CD8-positive, alpha-beta memory T cell (primary cell): ENCODE measurements at regions of chr13 and their contacts with region 1.

Region 1: GRCh38 chr13:42110410-42111155 is 62.1 kb downstream of the DGKH start:
- DNase-seq: peak in 3 of 5 donors; percentile 9 to 52 (median 45)
- H3K4me3 ChIP-seq: no peak overlapping the region
- H3K4me3 Mint-ChIP-seq: no peak overlapping the region
- H3K27ac ChIP-seq: no peak overlapping the region
- H3K27ac Mint-ChIP-seq: peak overlapping the region in 1 of 8 donors; percentile 15
- H3K4me1 ChIP-seq: peaks cover 6% of the 10 kb centered on the region
- H3K4me1 Mint-ChIP-seq: peaks cover 6 to 13% (median 7%) of the 10 kb centered on the region in 3 donors
- H3K27me3 ChIP-seq: no peaks in the 10 kb centered on the region
- H3K27me3 Mint-ChIP-seq: no peaks in the 10 kb centered on the region

Region 2: GRCh38 chr13:41668130-41668757 is 442.3 kb before region 1 on chr13:
- CTCF ChIA-PET with region 1: interaction called, 27 read pairs
- POLR2A ChIA-PET with region 1: no interaction called
- DNase-seq: peak in 4 of 5 donors; percentile 1 to 55 (median 32)
- H3K4me3 ChIP-seq: no peak overlapping the region
- H3K4me3 Mint-ChIP-seq: no peak overlapping the region
- H3K27ac ChIP-seq: no peak overlapping the region
- H3K27ac Mint-ChIP-seq: peak overlapping the region in 1 of 8 donors; percentile 33
- H3K4me1 ChIP-seq: no peaks in the 10 kb centered on the region
- H3K4me1 Mint-ChIP-seq: no peaks in the 10 kb centered on the region
- H3K27me3 ChIP-seq: no peaks in the 10 kb centered on the region
- H3K27me3 Mint-ChIP-seq: no peaks in the 10 kb centered on the region

Region 3: DNA sequence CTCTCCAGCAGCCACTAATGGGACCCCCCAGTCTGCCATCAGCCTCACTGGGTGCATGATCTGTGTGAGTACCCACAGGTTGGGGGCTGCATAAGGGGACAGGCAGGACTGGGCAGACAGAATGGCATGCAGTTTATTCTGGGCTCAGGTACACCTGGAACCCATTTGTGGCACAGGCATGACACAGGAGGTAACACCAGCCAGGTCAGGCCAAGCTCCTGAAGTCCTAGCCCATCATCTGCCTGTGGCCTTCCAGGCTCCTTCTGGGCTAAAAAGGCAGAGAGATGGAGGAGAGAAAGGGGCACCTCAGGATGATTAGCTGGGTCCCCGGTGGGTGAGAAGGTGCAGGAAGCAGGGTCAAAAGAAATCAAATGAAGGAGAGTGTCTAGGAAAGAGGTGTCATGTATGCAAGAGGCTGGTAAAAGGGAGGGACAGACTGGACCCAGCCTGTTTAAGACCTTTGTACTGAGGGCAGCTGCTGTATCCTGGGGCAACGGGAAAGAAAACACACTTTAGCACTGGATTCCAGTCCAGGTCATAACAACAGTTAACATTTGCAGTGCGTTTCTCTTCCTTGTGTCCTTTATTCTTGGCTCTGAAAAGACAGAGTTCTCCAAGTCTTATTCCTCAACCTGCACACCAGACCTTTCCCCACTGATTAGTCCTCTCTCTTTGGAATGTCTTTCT is 82.3 kb before region 1 on chr13:
- CTCF ChIA-PET with region 1: no interaction called
- POLR2A ChIA-PET with region 1: no interaction called
- DNase-seq: no peak
- H3K4me3 ChIP-seq: no peak overlapping the region
- H3K4me3 Mint-ChIP-seq: no peak overlapping the region
- H3K27ac ChIP-seq: no peak overlapping the region
- H3K27ac Mint-ChIP-seq: no peak overlapping the region
- H3K4me1 ChIP-seq: no peaks in the 10 kb centered on the region
- H3K4me1 Mint-ChIP-seq: no peaks in the 10 kb centered on the region
- H3K27me3 ChIP-seq: no peaks in the 10 kb centered on the region
- H3K27me3 Mint-ChIP-seq: peaks cover 17% of the 10 kb centered on the region in 2 donors

Region 4: DNA sequence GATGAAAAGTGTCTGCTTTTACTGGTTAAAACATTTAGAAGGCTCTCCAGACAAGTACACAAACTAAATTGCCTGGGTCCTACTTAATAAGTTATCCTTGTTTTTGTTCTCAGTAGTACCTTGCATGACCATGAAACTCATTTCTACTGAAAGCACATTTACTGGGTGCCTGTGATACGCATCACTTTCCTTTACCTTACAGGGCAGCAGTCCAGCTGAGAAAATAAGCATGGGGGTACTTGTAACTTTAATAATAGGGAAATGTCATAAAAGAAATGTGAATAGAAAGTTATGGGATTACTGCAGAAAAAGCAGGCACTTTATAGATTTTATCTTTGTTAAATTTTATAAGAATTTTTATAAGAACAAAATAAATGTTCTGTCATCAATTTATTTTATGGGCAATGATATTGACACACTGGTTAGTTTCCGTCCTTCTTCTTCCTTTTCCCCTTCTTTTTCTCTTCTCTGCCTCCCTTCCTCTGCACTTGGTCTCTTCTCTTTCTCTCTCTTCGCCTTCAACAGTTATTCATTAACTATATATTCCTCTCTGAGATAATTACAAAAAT is 54.1 kb after region 1 on chr13:
- CTCF ChIA-PET with region 1: no interaction called
- POLR2A ChIA-PET with region 1: no interaction called
- DNase-seq: no peak
- H3K4me3 ChIP-seq: no peak overlapping the region
- H3K4me3 Mint-ChIP-seq: no peak overlapping the region
- H3K27ac ChIP-seq: no peak overlapping the region
- H3K27ac Mint-ChIP-seq: peak overlapping the region in 3 of 8 donors; percentile 3 to 82 (median 59)
- H3K4me1 ChIP-seq: no peaks in the 10 kb centered on the region
- H3K4me1 Mint-ChIP-seq: no peaks in the 10 kb centered on the region
- H3K27me3 ChIP-seq: no peaks in the 10 kb centered on the region
- H3K27me3 Mint-ChIP-seq: no peaks in the 10 kb centered on the region

Region 5: GRCh38 chr13:42247883-42248282 is 137.3 kb after region 1 on chr13:
- CTCF ChIA-PET with region 1: no interaction called
- POLR2A ChIA-PET with region 1: no interaction called
- DNase-seq: no peak
- H3K4me3 ChIP-seq: no peak overlapping the region
- H3K4me3 Mint-ChIP-seq: no peak overlapping the region
- H3K27ac ChIP-seq: no peak overlapping the region
- H3K27ac Mint-ChIP-seq: no peak overlapping the region
- H3K4me1 ChIP-seq: no peaks in the 10 kb centered on the region
- H3K4me1 Mint-ChIP-seq: no peaks in the 10 kb centered on the region
- H3K27me3 ChIP-seq: no peaks in the 10 kb centered on the region
- H3K27me3 Mint-ChIP-seq: peaks cover 0 to 8% of the 10 kb centered on the region in 2 donors